Naive thymus-derived CD8-positive, alpha-beta T cell (primary cell): ENCODE measurements at regions of chr2 and their contacts with region 1.

Region 1: DNA sequence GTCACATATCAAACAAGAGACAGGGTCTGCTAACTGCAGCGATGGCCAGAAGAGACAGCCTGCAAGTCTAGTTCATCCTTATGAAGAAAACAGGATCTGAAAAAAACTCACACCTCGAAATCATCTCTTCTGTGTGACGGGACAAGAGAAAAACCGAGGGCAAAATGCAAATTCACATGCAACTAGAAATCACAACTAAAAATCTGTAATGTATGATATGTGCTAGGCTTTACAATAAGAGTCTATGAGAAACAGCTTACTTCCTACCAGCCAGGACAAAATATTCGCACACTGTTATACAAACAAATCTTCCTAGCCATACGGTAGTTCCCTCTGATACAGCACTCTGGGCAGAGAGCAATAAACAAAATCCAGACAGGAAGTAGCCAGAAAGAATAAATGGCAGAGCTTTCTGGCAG is 48.8 kb downstream of the ANKRD44 start:
- DNase-seq: no peak
- ATAC-seq: peak; percentile 23 to 42
- H3K4me3 Mint-ChIP-seq: peak overlapping the region; percentile 31 to 76 (median 67)
- H3K27ac Mint-ChIP-seq: peak overlapping the region; percentile 85 to 99 (median 94)
- H3K4me1 Mint-ChIP-seq: peaks cover 40 to 87% (median 84%) of the 10 kb centered on the region in 4 donors
- H3K27me3 Mint-ChIP-seq: no peaks in the 10 kb centered on the region

Region 2: GRCh38 chr2:197229509-197230443 is 32.0 kb before region 1 on chr2:
- POLR2A ChIA-PET with region 1: interaction called, 11 read pairs
- DNase-seq: no peak
- ATAC-seq: no peak
- H3K4me3 Mint-ChIP-seq: peak overlapping the region in 9 of 10 donors; percentile 6 to 73 (median 51)
- H3K27ac Mint-ChIP-seq: peak overlapping the region; percentile 51 to 100 (median 88)
- H3K4me1 Mint-ChIP-seq: peaks cover 42 to 98% (median 95%) of the 10 kb centered on the region in 4 donors
- H3K27me3 Mint-ChIP-seq: no peaks in the 10 kb centered on the region

Region 3: GRCh38 chr2:197248623-197249022 is 13.2 kb before region 1 on chr2:
- POLR2A ChIA-PET with region 1: interaction called, 10 read pairs
- DNase-seq: peak in 2 of 10 donors; percentile 28 to 43
- ATAC-seq: peak; percentile 61 to 86
- H3K4me3 Mint-ChIP-seq: peak overlapping the region; percentile 4 to 81 (median 66)
- H3K27ac Mint-ChIP-seq: peak overlapping the region; percentile 49 to 100 (median 92)
- H3K4me1 Mint-ChIP-seq: peaks cover 40 to 88% (median 80%) of the 10 kb centered on the region in 4 donors
- H3K27me3 Mint-ChIP-seq: no peaks in the 10 kb centered on the region